MCF 10A (cell line): ENCODE measurements at regions of chr2 and their contacts with region 1.

Region 1: GRCh38 chr2:27683390-27684071 is 19.8 kb downstream of the SLC4A1AP start:
- DNase-seq: peak; percentile 94
- H3K4me3 Mint-ChIP-seq: peak overlapping the region; percentile 35
- H3K27ac Mint-ChIP-seq: peak overlapping the region; percentile 59
- H3K4me1 Mint-ChIP-seq: peaks cover 29% of the 10 kb centered on the region
- H3K27me3 Mint-ChIP-seq: no peaks in the 10 kb centered on the region
- CTCF ChIP-seq: peak; percentile 99

Region 2: DNA sequence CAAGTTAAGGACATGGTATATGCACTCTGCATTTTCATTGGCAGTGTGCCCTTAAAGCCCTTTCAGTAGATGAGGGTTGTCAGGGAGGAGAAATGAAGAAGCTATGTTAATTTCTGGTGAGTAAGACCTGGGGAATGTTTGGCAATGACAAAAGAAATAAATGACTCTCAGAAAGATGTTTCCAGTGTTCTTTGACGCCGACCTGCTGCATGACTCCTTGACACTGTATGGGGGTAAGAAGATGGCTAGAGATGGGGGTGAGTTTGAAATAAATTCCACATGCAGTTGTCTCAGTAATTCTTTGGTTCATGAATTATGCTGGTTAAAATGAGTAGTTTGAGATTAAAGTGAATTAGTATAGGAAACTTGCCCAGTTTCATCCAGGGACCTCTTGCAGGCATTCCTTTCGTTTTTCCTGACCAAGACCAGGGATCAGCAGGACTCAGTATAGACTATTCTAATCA is 60.6 kb before region 1 on chr2:
- CTCF ChIA-PET with region 1: interaction called, 10 read pairs
- POLR2A ChIA-PET with region 1: interaction called, 16 read pairs
- intact Hi-C with region 1: no loop called
- DNase-seq: peak; percentile 75
- H3K4me3 Mint-ChIP-seq: no peak overlapping the region
- H3K27ac Mint-ChIP-seq: peak overlapping the region; percentile 1
- H3K4me1 Mint-ChIP-seq: peaks cover 33% of the 10 kb centered on the region
- H3K27me3 Mint-ChIP-seq: no peaks in the 10 kb centered on the region
- CTCF ChIP-seq: no peak

Region 3: GRCh38 chr2:27663463-27664249 is 19.9 kb before region 1 on chr2 and contains the starts of genes SLC4A1AP and SUPT7L:
- CTCF ChIA-PET with region 1: interaction called, 41 read pairs
- POLR2A ChIA-PET with region 1: interaction called, 27 read pairs
- intact Hi-C with region 1: no loop called
- DNase-seq: peak; percentile 83
- H3K4me3 Mint-ChIP-seq: peak within 1 kb of the TSS; percentile 92
- H3K27ac Mint-ChIP-seq: peak within 1 kb of the TSS; percentile 95
- H3K4me1 Mint-ChIP-seq: peaks cover 29% of the 10 kb centered on the region
- H3K27me3 Mint-ChIP-seq: no peaks in the 10 kb centered on the region
- CTCF ChIP-seq: no peak
- total RNA-seq, gene SLC4A1AP: 24.3 and 27.2 TPM in 2 replicates
- total RNA-seq, gene SUPT7L: 36.4 and 40.8 TPM in 2 replicates

Region 4: GRCh38 chr2:27672723-27673486 is 10.6 kb before region 1 on chr2:
- CTCF ChIA-PET with region 1: interaction called, 41 read pairs
- POLR2A ChIA-PET with region 1: interaction called, 3 read pairs
- intact Hi-C with region 1: no loop called
- DNase-seq: no peak
- H3K4me3 Mint-ChIP-seq: no peak overlapping the region
- H3K27ac Mint-ChIP-seq: no peak overlapping the region
- H3K4me1 Mint-ChIP-seq: no peaks in the 10 kb centered on the region
- H3K27me3 Mint-ChIP-seq: no peaks in the 10 kb centered on the region
- CTCF ChIP-seq: no peak